AG04449 (cell line): ENCODE measurements at regions of chr7 and their contacts with region 1.

Region 1: DNA sequence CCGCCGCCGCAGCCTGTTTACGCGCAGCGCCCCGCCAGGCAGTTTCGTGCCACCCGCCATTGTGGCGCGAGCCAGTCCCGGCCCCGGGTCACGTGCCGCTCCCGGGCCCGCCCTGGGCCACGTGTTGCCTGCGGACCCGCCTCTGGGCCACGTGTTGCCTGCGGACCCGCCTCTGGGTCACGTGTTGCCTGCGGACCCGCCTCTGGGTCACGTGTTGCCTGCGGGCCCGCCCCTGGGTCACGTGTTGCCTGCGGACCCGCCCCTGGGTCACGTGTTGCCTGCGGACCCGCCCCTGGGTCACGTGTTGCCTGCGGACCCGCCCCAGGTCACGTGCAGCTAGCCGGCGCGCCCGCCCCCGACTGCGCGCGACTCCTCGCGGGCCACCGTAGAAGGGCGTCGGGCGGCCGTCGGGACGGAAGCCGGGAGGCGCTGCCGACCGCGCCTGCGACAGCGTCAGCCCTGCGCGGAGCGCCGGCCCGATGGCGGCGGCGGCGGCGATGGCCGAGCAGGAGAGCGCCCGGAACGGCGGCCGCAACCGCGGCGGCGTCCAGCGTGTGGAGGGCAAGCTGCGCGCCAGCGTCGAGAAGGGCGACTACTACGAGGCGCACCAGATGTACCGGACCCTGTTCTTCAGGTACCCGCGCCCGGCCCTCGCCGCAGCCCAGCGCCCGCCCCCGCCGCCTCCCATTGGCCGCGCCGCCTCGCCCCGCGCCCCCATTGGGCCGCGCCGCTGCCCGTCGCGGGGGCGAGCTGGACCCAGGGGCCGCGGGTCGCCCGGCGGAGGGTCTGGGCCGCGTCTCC is at the start of gene GET4:
- DNase-seq: peak; percentile 62
- H3K4me3 ChIP-seq: peak within 1 kb of the TSS; percentile 91
- CTCF ChIP-seq: peak; percentile 25

Region 2: DNA sequence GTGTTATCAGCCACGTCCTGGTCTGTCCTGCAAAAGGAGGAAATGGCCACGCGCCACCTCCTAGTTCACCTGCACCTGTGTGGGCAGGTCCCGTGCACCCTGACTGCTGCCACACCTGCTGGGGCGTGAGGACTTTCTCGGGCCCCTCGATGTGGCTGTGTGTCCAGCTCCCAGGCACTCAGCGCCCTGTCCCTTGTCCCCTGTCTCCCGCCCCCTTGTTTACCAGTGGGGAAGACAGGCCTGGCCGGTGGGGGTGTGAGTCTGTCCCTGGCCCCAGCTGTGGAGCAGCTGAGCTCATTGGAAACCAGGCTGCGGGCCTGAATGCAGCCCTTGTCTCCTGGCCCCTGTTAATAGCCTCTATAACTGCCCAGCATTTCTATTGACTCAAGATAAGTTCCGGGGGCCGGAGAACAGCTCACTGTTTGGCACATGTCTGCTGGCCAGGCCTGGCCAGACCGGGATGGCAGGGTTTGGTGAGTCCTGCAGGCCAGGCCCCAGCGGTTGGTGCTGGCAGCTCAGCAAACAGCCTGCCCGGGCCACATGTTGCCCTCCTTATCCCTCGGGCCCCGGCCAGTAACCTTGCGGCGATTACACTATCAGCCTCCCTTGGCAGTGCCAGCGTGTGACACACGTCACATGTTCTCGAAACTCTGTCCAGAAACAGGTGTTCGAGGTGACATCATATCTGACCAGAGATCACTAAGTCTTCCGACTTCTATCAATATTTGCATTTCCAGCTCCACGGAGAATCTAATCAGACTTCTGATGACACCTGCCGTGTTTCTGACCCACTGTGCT is 534.3 kb before region 1 on chr7:
- CTCF ChIA-PET with region 1: no interaction called
- POLR2A ChIA-PET with region 1: no interaction called
- DNase-seq: no peak
- H3K4me3 ChIP-seq: no peak overlapping the region
- CTCF ChIP-seq: no peak

Region 3: GRCh38 chr7:836411-837400 is 39.7 kb before region 1 on chr7:
- CTCF ChIA-PET with region 1: interaction called, 12 read pairs
- POLR2A ChIA-PET with region 1: no interaction called
- DNase-seq: no peak
- H3K4me3 ChIP-seq: no peak overlapping the region
- CTCF ChIP-seq: peak; percentile 61

Region 4: GRCh38 chr7:854118-854775 is 22.1 kb before region 1 on chr7:
- CTCF ChIA-PET with region 1: interaction called, 41 read pairs
- POLR2A ChIA-PET with region 1: no interaction called
- DNase-seq: no peak
- H3K4me3 ChIP-seq: no peak overlapping the region
- CTCF ChIP-seq: no peak

Region 5: GRCh38 chr7:859359-860030 is 16.9 kb before region 1 on chr7:
- CTCF ChIA-PET with region 1: interaction called, 41 read pairs
- POLR2A ChIA-PET with region 1: no interaction called
- DNase-seq: no peak
- H3K4me3 ChIP-seq: no peak overlapping the region
- CTCF ChIP-seq: no peak